Pancreas (tissue), 10 donors: ENCODE measurements at regions of chr1 and their contacts with region 1.

Region 1: DNA sequence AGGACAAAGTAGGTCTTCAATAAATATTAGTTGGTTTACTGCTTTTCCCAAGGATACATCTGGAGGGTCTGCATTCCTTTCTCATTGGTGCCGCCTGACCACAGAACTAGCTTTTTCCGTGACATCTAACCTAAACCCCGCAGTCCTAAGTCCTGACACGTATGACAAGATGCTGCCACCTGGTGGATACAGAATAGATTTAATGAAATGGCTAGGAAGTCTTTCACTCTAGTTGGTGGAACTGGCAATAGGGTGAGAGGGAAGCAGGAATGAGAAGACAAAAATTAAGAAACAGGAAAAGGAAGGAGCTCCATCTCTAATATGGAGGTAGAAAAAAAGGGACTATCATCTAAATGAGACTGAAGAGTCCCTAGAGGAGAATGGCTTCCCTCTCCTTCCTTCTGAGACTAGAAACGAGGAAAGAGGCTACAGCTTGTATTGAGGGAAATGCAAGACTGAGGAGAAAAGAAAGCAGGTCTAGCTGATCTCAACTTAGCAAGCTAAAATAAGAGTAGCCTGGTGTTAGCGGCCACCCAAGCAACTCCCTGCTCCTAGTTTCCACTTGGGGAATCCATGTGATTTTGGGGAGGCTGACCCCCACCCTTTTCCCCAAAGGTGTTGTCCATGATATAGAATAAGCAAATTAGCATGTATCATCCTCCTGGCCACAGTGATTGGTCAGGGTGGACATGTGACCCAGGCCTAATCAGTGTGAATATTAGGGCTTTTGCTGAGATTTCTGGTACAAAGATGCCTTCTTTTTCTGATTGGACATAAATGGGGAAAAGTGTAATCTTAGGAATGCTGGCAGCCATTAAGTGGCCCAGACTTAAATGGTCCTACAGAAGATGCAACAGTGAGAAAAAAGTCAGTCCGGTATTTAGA is 5.9 kb downstream of the RFX5 start:
- DNase-seq: peak in 3 of 6 donors; percentile 41 to 55 (median 54)
- ATAC-seq: peak; percentile 87 to 97 (median 94)
- H3K4me3 ChIP-seq: no peak overlapping the region
- H3K27ac ChIP-seq: no peak overlapping the region
- H3K4me1 ChIP-seq: peaks cover 0 to 9% (median 0%) of the 10 kb centered on the region in 3 donors
- H3K27me3 ChIP-seq: no peaks in the 10 kb centered on the region
- CTCF ChIP-seq: peak; percentile 32 to 53 (median 40)

Region 2: GRCh38 chr1:151013518-151013917 is 327.6 kb before region 1 on chr1:
- intact Hi-C with region 1: no loop called
- DNase-seq: peak in 2 of 6 donors; percentile 47 to 56
- ATAC-seq: peak; percentile 58 to 78 (median 72)
- H3K4me3 ChIP-seq: no peak overlapping the region
- H3K27ac ChIP-seq: peak overlapping the region in 1 of 4 donors; percentile 28
- H3K4me1 ChIP-seq: peaks cover 0 to 21% (median 10%) of the 10 kb centered on the region in 3 donors
- H3K27me3 ChIP-seq: no peaks in the 10 kb centered on the region
- CTCF ChIP-seq: no peak

Region 3: DNA sequence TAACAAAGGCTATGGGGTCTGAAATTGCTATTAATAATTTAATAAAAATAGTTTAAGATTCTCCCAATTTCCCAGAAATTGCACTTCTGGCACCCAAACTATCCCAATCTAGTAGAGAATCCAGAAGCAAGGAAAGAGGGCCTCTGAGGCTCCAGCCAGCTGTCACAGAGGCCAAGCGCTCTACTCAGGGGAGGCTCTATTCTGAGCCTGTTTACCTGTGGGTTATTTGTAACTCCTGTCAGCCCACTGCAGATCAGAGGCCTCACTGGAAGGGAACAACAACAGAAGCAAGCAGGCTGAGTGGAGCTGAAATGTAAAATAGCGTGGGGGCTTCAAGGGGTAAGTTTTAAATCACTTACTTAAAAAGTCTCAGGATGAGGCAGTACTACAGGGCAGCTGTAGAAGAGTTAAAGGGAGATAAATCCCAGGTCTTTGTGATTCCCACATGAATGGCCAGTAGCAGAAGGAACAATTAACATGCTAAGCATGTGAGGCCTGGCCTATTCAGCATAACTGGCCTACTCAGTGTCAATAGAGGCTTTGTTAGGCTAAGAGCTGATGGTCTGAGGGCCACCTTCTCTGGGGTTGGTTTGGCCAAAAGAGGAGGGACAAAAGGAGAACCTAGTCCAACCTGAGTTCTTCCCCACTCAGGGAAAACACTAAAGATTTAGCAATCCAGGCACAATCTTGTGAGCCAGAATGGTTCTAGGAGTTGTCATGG is 46.2 kb before region 1 on chr1:
- intact Hi-C with region 1: loop called in 1 of 3 experiments (anchors 5 kb)
- DNase-seq: no peak
- ATAC-seq: no peak
- H3K4me3 ChIP-seq: no peak overlapping the region
- H3K27ac ChIP-seq: no peak overlapping the region
- H3K4me1 ChIP-seq: no peaks in the 10 kb centered on the region
- H3K27me3 ChIP-seq: no peaks in the 10 kb centered on the region
- CTCF ChIP-seq: no peak